Left ventricle myocardium superior (tissue), 1 donor: ENCODE measurements at regions of chr7 and their contacts with region 1.

Region 1: DNA sequence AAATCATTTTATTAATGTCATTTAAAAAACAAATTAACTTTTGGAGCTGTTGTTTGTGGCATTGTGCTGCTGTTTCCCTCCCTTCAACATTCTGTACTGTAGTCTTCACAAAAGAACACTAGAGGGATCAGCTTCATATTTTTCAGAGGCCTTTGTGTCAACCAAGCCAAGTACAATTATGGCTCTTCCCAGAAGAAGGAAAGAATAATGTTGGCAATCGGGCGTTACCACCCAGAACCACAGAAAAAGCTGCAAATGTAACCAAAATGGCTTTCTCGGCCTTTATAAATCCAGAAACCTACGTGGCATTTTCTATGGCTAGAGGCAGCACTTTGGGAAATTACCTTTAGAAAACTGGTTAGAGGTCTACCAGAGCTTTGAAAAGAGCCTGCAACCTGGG is 98.8 kb upstream of the COL1A2 start:
- DNase-seq: no peak
- ATAC-seq: peak; percentile 71

Region 2: DNA sequence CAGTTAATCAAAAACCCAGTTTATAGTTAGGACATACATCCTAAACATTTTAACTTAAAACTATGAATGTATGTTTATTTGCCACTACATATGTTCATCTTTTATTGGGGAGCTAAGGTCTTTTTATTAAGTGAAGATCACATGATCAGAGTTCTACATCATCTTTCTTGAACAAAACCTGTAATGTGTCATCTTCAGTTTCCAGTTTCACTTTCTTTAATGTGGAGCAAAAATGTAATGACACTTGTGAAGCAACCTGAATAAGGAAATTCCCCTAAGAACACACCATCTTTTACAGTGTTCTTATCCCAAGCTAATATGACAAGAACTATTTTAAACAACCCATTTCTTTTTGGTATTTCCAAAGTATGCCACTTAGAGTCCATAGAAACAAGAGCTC is 125.0 kb before region 1 on chr7:
- intact Hi-C with region 1: no loop called
- DNase-seq: no peak
- ATAC-seq: no peak

Region 3: DNA sequence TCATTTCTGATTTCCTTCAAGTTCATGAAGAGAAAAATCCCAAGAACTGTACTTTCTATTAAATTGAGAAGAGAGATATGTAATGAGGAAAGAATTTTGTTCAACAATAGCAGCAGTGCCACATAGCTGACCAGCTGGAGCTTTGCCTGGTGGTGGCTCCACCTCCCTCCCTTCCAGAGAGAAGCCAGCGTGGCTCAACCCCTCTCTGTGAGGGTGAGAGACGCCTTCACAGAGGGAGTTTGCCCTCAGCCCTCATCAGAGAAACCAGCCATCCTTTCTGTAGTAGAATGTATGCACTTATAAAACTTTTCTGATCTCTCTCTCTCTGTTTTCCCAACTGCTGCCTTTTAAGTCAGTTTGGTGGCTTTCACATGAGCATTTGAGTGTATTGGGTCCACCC is 78.4 kb after region 1 on chr7:
- intact Hi-C with region 1: loop called (anchors 2 kb)
- DNase-seq: peak; percentile 84
- ATAC-seq: peak; percentile 92